Activated naive CD4-positive, alpha-beta T cell treated with anti-CD3 and anti-CD28 coated beads, Interleukin-2, amount 10 ng/mL, durations not matched to agents 7 days and 5 days (primary cell): ENCODE measurements at regions of chr10 and their contacts with region 1.

Region 1: GRCh38 chr10:102713814-102714620 is at the start of gene ARL3:
- DNase-seq: peak; percentile 98
- H3K4me3 Mint-ChIP-seq: peak within 1 kb of the TSS; percentile 75
- H3K27ac Mint-ChIP-seq: peak within 1 kb of the TSS; percentile 85
- H3K4me1 Mint-ChIP-seq: peaks cover 45% of the 10 kb centered on the region
- H3K27me3 Mint-ChIP-seq: no peaks in the 10 kb centered on the region

Region 2: GRCh38 chr10:102503281-102504220 is 210.5 kb before region 1 on chr10 and contains the start of gene SUFU:
- CTCF ChIA-PET with region 1: interaction called, 10 read pairs
- DNase-seq: peak; percentile 98
- H3K4me3 Mint-ChIP-seq: no peak within 1 kb of the TSS
- H3K27ac Mint-ChIP-seq: peak within 1 kb of the TSS; percentile 87
- H3K4me1 Mint-ChIP-seq: peaks cover 28% of the 10 kb centered on the region
- H3K27me3 Mint-ChIP-seq: no peaks in the 10 kb centered on the region

Region 3: DNA sequence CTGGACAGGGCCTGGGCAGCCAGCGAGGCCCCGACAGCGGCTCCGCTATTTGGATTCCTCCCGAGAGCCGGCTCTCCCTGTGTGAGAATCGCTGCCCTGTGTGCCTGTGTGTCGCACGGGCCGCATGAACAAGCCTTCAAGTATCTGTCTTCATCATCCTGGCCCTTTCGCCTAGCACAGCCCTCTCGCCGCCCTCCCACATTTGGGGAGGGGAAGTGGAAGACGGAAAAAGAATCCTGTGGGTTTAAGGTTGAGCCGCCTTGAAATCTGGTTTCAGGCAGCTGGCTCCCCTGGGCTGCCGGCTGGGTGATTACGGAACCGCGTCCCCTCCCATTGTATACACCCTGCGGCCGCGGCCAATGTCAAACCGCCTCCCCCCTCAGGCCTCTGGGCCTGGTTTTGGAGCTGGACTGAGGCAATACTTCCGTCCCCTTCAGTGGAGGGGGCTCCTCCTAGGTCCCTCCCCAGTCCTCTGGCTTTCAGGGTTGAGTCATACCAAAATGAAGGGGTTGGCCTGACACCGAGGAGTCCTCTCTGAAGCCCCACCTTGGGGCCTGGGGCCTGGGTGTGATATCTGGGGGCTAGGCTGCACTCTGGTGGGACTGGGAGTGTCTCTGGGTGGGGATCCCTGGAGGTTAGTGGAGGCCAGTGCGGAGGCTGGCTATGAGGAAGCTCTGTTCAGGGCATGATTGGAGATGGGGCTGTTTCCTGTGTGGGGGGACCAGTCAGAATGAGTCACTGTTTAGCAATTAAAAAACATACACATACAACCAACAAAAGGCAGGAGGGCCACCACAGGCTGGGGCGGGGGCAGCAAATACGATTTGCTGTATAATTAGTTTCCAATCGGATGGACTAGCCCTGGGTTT is 68.0 kb before region 1 on chr10:
- CTCF ChIA-PET with region 1: interaction called, 17 read pairs
- DNase-seq: peak; percentile 81
- H3K4me3 Mint-ChIP-seq: peak overlapping the region; percentile 92
- H3K27ac Mint-ChIP-seq: peak overlapping the region; percentile 96
- H3K4me1 Mint-ChIP-seq: peaks cover 55% of the 10 kb centered on the region
- H3K27me3 Mint-ChIP-seq: no peaks in the 10 kb centered on the region

Region 4: DNA sequence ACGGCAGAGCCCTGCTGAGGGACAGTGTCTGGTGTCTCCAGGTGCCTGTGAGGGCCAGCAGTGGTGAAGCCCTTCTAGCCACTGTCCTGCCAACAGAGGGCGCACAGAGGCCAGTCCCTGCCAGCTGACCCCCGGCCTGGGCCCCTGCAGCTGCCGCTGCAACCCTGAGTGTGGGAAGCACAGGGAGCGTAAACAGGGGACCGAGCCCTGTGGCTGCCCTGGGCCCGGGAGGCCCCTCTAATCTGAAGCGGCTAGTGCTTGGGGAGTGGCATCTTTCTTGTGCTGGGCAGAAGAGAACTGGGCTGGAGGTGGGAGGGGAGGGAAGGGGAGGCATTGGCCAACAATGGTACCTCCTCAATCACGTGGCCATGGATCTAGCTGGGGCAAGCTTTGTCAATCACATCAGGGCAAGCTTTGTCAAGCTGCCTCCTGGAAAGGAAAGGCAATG is 35.2 kb before region 1 on chr10:
- CTCF ChIA-PET with region 1: interaction called, 15 read pairs
- DNase-seq: peak; percentile 32
- H3K4me3 Mint-ChIP-seq: no peak overlapping the region
- H3K27ac Mint-ChIP-seq: no peak overlapping the region
- H3K4me1 Mint-ChIP-seq: peaks cover 51% of the 10 kb centered on the region
- H3K27me3 Mint-ChIP-seq: no peaks in the 10 kb centered on the region

Region 5: GRCh38 chr10:102729029-102730026 is 15.3 kb after region 1 on chr10:
- CTCF ChIA-PET with region 1: interaction called, 12 read pairs
- DNase-seq: peak; percentile 76
- H3K4me3 Mint-ChIP-seq: no peak overlapping the region
- H3K27ac Mint-ChIP-seq: no peak overlapping the region
- H3K4me1 Mint-ChIP-seq: peaks cover 2% of the 10 kb centered on the region
- H3K27me3 Mint-ChIP-seq: no peaks in the 10 kb centered on the region